Activated CD4-positive, alpha-beta memory T cell treated with anti-CD3 and anti-CD28 coated beads for 36 hours (primary cell): ENCODE measurements at regions of chr1 and their contacts with region 1.

Region 1: GRCh38 chr1:26811057-26811456 is 15.4 kb upstream of the ZDHHC18 start:
- DNase-seq: no peak
- H3K4me3 Mint-ChIP-seq: no peak overlapping the region
- H3K27ac Mint-ChIP-seq: peak overlapping the region; percentile 38
- H3K4me1 Mint-ChIP-seq: peaks cover 20% of the 10 kb centered on the region
- H3K27me3 Mint-ChIP-seq: no peaks in the 10 kb centered on the region

Region 2: GRCh38 chr1:26582836-26583460 is 228.1 kb before region 1 on chr1:
- CTCF ChIA-PET with region 1: interaction called, 10 read pairs
- POLR2A ChIA-PET with region 1: no interaction called
- intact Hi-C with region 1: no loop called
- DNase-seq: peak; percentile 94
- H3K4me3 Mint-ChIP-seq: no peak overlapping the region
- H3K27ac Mint-ChIP-seq: peak overlapping the region; percentile 73
- H3K4me1 Mint-ChIP-seq: peaks cover 47% of the 10 kb centered on the region
- H3K27me3 Mint-ChIP-seq: no peaks in the 10 kb centered on the region

Region 3: GRCh38 chr1:26602378-26602959 is 208.6 kb before region 1 on chr1:
- CTCF ChIA-PET with region 1: interaction called, 23 read pairs
- POLR2A ChIA-PET with region 1: no interaction called
- intact Hi-C with region 1: no loop called
- DNase-seq: no peak
- H3K4me3 Mint-ChIP-seq: no peak overlapping the region
- H3K27ac Mint-ChIP-seq: no peak overlapping the region
- H3K4me1 Mint-ChIP-seq: peaks cover 7% of the 10 kb centered on the region
- H3K27me3 Mint-ChIP-seq: no peaks in the 10 kb centered on the region

Region 4: GRCh38 chr1:26799479-26800142 is 11.4 kb before region 1 on chr1:
- CTCF ChIA-PET with region 1: interaction called, 54 read pairs
- POLR2A ChIA-PET with region 1: interaction called, 3 read pairs
- intact Hi-C with region 1: no loop called
- DNase-seq: peak; percentile 33
- H3K4me3 Mint-ChIP-seq: no peak overlapping the region
- H3K27ac Mint-ChIP-seq: peak overlapping the region; percentile 89
- H3K4me1 Mint-ChIP-seq: peaks cover 35% of the 10 kb centered on the region
- H3K27me3 Mint-ChIP-seq: no peaks in the 10 kb centered on the region

Region 5: GRCh38 chr1:26826261-26827105 is 15.4 kb after region 1 on chr1 and contains the start of gene ZDHHC18:
- CTCF ChIA-PET with region 1: interaction called, 71 read pairs
- POLR2A ChIA-PET with region 1: interaction called, 3 read pairs
- intact Hi-C with region 1: no loop called
- DNase-seq: peak; percentile 79
- H3K4me3 Mint-ChIP-seq: peak within 1 kb of the TSS; percentile 94
- H3K27ac Mint-ChIP-seq: peak within 1 kb of the TSS; percentile 96
- H3K4me1 Mint-ChIP-seq: peaks cover 41% of the 10 kb centered on the region
- H3K27me3 Mint-ChIP-seq: no peaks in the 10 kb centered on the region
- total RNA-seq, gene ZDHHC18: 60.2 to 63.5 TPM

Region 6: GRCh38 chr1:26833432-26834405 is 22.7 kb after region 1 on chr1:
- CTCF ChIA-PET with region 1: interaction called, 71 read pairs
- POLR2A ChIA-PET with region 1: no interaction called
- intact Hi-C with region 1: loop called (anchors 2 kb)
- DNase-seq: peak; percentile 93
- H3K4me3 Mint-ChIP-seq: peak overlapping the region; percentile 72
- H3K27ac Mint-ChIP-seq: peak overlapping the region; percentile 100
- H3K4me1 Mint-ChIP-seq: peaks cover 78% of the 10 kb centered on the region
- H3K27me3 Mint-ChIP-seq: no peaks in the 10 kb centered on the region

Region 7: DNA sequence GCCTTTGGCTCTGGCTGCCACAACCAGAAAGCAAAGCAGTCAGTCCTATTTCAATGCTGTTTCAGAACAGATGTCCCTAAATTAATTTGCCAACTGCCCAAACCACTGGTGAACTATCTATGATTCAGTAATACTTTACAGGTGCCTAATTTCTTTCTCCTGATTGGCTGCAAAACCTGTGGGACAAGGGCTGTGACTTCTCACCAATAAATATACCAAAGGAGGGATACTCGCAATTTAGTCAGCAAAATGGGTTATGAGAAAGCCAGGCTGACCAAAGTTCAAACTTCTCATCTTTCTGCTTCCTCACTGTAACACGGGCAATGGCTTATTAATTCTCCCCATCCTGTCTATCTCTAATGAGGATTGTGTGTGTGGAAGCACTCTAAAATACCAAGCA is 66.3 kb after region 1 on chr1:
- CTCF ChIA-PET with region 1: interaction called, 16 read pairs
- POLR2A ChIA-PET with region 1: no interaction called
- intact Hi-C with region 1: loop called (anchors 2 kb)
- DNase-seq: no peak
- H3K4me3 Mint-ChIP-seq: no peak overlapping the region
- H3K27ac Mint-ChIP-seq: no peak overlapping the region
- H3K4me1 Mint-ChIP-seq: no peaks in the 10 kb centered on the region
- H3K27me3 Mint-ChIP-seq: no peaks in the 10 kb centered on the region